ENCODE measurements at regions of chr4 and their contacts with region 1.

Region 1: DNA sequence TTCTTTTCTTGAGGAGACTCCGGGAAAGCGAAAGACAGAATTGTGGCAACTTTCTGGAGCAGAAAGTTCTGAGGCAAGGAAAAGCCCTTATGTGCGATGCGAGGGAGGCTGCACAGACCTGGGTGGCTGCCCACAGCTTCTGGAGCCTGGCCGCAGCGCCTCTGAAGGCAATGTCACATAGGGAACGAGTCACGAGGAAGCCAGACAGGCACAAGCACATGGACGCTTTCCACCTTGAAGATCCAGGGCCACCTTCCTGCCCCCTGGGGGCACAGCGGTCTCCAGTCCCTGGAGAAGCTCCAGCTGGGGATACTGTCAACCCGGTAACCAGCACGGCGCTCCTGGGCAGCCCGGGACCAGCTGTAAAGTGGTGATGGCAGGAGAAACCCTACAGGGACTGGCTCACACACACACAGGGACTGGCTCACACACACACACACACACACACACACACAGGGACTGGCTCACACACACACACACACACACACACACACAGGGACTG is 69.8 kb downstream of the MTNR1A start:
- DNase-seq: no peak
- ATAC-seq: peak; percentile 58

Region 2: DNA sequence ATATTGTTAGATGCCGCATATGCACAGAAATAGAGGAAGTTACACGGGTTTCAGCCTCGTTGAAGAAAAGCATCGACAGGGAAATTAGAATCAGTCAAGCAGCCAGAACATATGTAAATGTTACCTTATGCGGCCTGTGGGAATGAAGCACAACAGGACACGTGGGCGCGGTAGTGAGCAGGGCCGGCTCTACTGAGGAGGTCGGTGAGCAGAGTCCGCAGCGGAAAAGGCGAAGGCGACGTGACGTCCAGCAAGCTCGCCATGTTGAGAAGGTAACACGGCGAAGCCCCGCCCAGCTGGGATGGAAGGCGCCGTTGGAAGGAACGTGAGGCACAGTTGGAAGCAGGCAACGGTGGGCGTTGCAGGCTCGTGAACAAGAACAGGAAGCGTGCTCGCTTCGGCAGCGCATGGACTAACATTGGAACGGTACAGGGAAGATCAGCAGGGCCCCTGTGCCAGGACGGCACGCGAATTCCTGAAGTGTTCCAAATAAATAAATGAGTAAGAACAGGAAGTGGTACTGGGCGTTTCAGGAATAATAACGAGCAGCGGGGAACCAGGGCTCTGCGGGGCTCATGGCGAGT is 15.2 kb after region 1 on chr4:
- intact Hi-C with region 1: loop called (anchors 1 kb)
- DNase-seq: no peak
- ATAC-seq: no peak

Measured in sciatic nerve (tissue), 2 donors.